SK-N-SH (cell line): ENCODE measurements at regions of chr4 and their contacts with region 1.

Region 1: DNA sequence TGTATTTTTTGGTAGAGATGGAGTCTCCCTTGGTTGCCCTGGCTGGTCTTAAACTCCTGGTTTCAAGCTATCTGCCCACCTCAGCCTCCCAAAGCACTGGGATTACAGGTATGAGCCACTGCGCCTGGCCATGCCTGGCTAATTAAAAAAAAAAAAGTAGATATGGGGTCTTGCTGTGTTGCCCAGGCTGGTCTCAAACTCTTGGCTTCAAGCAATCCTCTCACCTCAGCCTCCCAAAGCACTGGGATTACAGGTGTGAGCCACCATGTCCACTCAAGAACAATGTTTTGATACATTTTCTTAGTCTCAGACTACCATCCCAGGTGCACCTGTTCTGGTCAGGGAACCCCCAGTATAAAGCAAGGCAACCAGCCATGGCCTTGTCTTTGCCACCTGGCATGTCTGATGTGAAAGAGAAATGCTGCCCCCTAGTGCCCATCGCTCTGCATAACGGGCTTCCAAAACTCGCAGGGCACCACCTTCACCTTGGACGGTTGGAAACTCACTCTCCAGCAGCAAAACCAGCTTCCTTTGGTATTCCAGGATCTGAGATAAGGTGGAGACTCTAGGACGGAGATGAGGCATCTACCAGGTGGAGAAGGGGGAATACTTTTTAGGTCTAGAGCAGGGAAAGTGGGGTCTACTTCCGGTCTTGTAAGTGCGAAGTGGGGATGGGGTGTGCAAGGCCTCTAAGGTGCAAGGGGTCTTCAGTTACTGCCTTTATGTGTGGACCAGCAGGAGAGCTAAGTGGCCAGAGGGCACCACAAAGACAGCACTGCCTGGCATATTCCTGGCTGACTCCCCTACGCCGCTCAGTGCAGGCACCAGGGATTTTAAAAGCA is 47.7 kb upstream of the AFAP1 start:
- DNase-seq: peak; percentile 86
- H3K4me3 ChIP-seq: no peak overlapping the region; a peak in 1 of 4 replicates
- H3K27ac ChIP-seq: no peak overlapping the region
- H3K4me1 ChIP-seq: no peaks in the 10 kb centered on the region; a peak in 1 of 4 replicates
- H3K27me3 ChIP-seq: no peaks in the 10 kb centered on the region
- CTCF ChIP-seq: peak; percentile 88
- EP300 ChIP-seq: no peak
- RAD21 ChIP-seq: peak; percentile 96

Region 2: GRCh38 chr4:7761720-7762119 is 225.6 kb before region 1 on chr4:
- CTCF ChIA-PET with region 1: interaction called, 46 read pairs
- POLR2A ChIA-PET with region 1: no interaction called
- DNase-seq: peak; percentile 91
- H3K4me3 ChIP-seq: no peak overlapping the region; a peak in 1 of 4 replicates
- H3K27ac ChIP-seq: no peak overlapping the region; a peak in 1 of 4 replicates
- H3K4me1 ChIP-seq: peaks cover 0 to 4% of the 10 kb centered on the region in 2 experiments; a peak in 1 of 4 replicates
- H3K27me3 ChIP-seq: no peaks in the 10 kb centered on the region
- CTCF ChIP-seq: peak; percentile 72
- EP300 ChIP-seq: no peak
- RAD21 ChIP-seq: peak; percentile 73

Region 3: DNA sequence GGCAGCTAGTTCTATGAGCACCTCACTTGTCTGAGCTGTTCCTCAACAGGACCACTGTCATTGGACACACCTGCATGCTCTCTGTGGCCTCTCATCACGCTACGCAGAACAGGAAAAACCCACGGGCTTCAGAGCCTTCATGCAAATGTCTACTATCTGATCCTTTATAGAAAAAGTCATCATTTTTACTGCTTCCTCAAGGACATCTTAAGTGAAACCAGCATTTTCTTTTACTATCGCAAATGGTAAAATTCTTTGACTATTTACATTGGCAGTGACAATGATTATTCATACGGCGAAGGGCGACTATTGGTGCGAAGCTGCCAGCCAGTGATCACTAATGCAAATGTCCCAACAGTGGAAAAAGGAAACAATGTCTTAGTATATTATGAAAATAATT is 194.8 kb before region 1 on chr4:
- CTCF ChIA-PET with region 1: interaction called, 17 read pairs
- POLR2A ChIA-PET with region 1: no interaction called
- DNase-seq: no peak
- H3K4me3 ChIP-seq: no peak overlapping the region
- H3K27ac ChIP-seq: peak overlapping the region in 1 of 2 experiments; percentile 53; a peak in 1 of 4 replicates
- H3K4me1 ChIP-seq: peaks cover 11 to 14% of the 10 kb centered on the region in 2 experiments; a peak in 3 of 4 replicates
- H3K27me3 ChIP-seq: no peaks in the 10 kb centered on the region
- CTCF ChIP-seq: no peak
- EP300 ChIP-seq: no peak
- RAD21 ChIP-seq: no peak

Region 4: GRCh38 chr4:7947927-7948326 is 39.4 kb before region 1 on chr4:
- CTCF ChIA-PET with region 1: interaction called, 15 read pairs
- POLR2A ChIA-PET with region 1: no interaction called
- DNase-seq: no peak
- H3K4me3 ChIP-seq: no peak overlapping the region
- H3K27ac ChIP-seq: peak overlapping the region in 1 of 2 experiments; percentile 82; a peak in 2 of 4 replicates
- H3K4me1 ChIP-seq: peaks cover 0 to 24% of the 10 kb centered on the region in 2 experiments; a peak in 2 of 4 replicates
- H3K27me3 ChIP-seq: no peaks in the 10 kb centered on the region
- CTCF ChIP-seq: no peak
- EP300 ChIP-seq: no peak
- RAD21 ChIP-seq: no peak

Region 5: DNA sequence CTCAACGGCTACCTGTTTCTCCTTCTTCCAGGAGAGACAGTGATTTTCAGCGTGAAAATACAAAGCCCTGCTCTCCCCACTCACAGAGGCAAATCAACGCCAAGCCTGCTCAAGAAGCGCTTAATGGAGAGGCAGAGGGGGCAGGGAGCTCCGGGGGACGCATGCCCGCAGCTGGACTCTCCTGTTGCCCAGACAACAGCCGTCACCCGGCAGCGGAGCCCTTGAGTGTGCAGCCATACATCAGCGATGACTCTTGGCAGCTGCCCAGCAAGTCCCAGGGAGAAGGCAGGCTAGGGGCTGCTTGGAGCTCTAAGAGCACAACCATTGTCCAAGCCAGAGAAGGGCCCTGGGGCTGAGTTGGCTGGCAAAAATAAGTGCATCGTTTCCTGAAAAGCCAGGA is 23.2 kb after region 1 on chr4:
- CTCF ChIA-PET with region 1: interaction called, 35 read pairs
- POLR2A ChIA-PET with region 1: no interaction called
- DNase-seq: peak; percentile 96
- H3K4me3 ChIP-seq: peak overlapping the region in 1 of 2 experiments; percentile 29; a peak in 1 of 4 replicates
- H3K27ac ChIP-seq: peak overlapping the region in 1 of 2 experiments; percentile 97; a peak in 2 of 4 replicates
- H3K4me1 ChIP-seq: peaks cover 9 to 36% of the 10 kb centered on the region in 2 experiments; a peak in 3 of 4 replicates
- H3K27me3 ChIP-seq: no peaks in the 10 kb centered on the region
- CTCF ChIP-seq: no peak
- EP300 ChIP-seq: peak in 1 of 2 experiments; percentile 64; a peak in 1 of 4 replicates
- RAD21 ChIP-seq: no peak; the same call in 1 of the 2 replicates